Activated T-helper 1 cell treated with anti-CD3 and anti-CD28 coated beads, Interleukin-12 subunit alpha, Interleukin-12 subunit beta, Interleukin-2, Interleukin-4 antibody, amounts not matched to agents 30 ng/mL and 10 ng/mL and 1 ng/mL, durations not matched to agents 14 hours and 24 hours and 36 hours (primary cell): ENCODE measurements at regions of chr12 and their contacts with region 1.

Region 1: GRCh38 chr12:132083941-132084620 is 60.0 kb downstream of the DDX51 start:
- DNase-seq: peak; percentile 87
- H3K4me3 Mint-ChIP-seq: peak overlapping the region; percentile 97
- H3K27ac Mint-ChIP-seq: peak overlapping the region; percentile 96
- H3K4me1 Mint-ChIP-seq: peaks cover 27% of the 10 kb centered on the region
- H3K27me3 Mint-ChIP-seq: no peaks in the 10 kb centered on the region

Region 2: GRCh38 chr12:130871286-130872178 is 1212.5 kb before region 1 on chr12 and contains the start of gene RAN:
- intact Hi-C with region 1: loop called (anchors 10 kb)
- DNase-seq: peak; percentile 87
- H3K4me3 Mint-ChIP-seq: peak within 1 kb of the TSS; percentile 99
- H3K27ac Mint-ChIP-seq: peak within 1 kb of the TSS; percentile 99
- H3K4me1 Mint-ChIP-seq: peaks cover 53% of the 10 kb centered on the region
- H3K27me3 Mint-ChIP-seq: no peaks in the 10 kb centered on the region
- total RNA-seq, gene RAN: 1,823 and 1,852 TPM in 2 replicates

Region 3: DNA sequence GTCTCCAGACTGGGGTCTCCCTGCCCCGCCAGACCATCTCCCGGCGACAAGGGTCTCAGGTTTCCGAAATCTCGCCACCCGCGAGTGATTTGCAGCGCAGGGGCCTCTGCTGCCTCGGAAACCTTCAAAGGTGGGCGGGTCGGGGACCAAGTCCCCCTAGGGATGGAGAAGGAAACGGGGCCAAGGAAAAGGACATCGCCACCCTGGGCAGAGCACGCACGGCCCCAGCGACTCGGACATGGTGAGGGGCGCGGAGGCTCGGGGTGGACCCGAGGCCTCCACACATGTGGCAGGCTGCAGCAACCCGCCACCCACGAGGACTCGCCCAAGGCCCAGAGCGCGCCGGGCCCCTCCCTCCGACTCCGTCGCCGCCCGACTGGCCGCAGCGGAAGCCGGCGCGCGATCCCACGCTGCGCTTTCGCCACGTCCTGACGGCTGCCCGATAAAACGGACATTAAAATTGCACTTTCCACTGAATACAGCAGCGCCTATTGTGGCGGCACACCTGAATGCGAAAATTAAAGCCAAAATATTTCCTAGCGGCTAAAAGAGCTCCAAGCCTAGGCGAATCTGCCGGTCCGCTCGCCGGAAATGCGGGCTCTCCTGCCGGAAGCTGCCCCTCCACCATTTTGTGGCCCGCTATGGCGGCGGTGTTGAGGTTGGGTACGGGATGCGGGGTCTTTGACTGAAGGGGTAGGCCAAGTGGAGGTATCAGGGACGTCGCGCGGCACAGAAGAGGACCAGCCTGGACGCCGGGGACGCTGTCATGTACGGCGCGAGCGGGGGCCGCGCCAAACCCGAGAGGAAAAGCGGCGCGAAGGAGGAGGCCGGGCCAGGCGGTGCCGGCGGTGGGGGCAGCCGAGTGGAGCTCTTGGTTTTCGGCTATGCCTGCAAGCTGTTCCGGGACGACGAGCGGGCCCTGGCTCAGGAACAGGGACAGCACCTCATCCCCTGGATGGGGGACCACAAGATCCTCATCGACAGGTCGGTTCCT is 373.3 kb before region 1 on chr12 and contains the start of gene SFSWAP:
- intact Hi-C with region 1: loop called (anchors 10 kb)
- DNase-seq: peak; percentile 72
- H3K4me3 Mint-ChIP-seq: peak within 1 kb of the TSS; percentile 93
- H3K27ac Mint-ChIP-seq: peak within 1 kb of the TSS; percentile 92
- H3K4me1 Mint-ChIP-seq: peaks cover 26% of the 10 kb centered on the region
- H3K27me3 Mint-ChIP-seq: peaks cover 4% of the 10 kb centered on the region
- total RNA-seq, gene SFSWAP: 65.3 and 69.3 TPM in 2 replicates

Region 4: DNA sequence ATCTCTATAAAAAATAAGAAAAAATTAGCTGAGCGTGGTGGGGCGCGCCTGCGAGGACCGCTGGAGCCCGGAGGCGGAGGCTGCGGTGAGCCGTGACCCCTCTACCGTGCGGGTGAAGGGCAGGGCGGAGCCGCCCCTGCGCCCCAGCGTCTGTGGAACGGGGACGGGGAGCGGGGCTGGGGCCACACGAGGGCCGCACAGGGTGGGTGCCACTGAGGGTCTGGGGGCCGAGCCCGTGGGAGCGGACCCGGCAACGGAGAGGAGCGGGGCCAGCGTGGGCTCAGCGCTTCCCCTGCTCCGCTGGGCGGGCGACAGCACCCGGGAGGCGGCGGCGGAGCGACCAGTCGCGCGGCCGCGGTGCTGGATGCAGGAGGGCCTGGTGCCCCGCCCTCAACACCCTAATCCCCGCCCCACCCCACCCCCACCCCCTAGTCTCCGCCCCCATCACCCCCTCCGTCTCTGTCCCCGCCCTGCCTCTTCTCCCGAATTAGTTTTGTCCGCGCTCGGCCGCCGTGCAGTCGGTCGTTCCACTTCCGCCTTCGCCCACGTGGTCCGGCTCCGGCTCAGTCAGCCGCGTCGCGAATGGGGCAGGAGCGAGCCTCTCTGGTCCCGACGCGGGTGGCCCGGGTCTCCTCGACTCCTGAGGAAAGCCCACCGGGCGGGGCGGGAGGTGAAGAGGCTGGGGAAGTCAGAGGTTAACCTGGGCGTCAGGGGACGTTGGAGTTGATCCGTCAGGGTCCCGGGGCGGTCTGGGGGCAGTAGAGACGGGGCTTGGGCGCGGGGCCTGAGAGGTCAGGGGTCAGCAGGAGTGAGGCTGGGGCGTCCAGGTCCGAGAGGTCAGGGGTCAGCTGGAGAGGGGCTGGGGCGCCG is 155.1 kb before region 1 on chr12 and contains the start of gene PUS1:
- intact Hi-C with region 1: loop called (anchors 1 kb)
- DNase-seq: peak; percentile 93
- H3K4me3 Mint-ChIP-seq: peak within 1 kb of the TSS; percentile 98
- H3K27ac Mint-ChIP-seq: peak within 1 kb of the TSS; percentile 95
- H3K4me1 Mint-ChIP-seq: peaks cover 13% of the 10 kb centered on the region
- H3K27me3 Mint-ChIP-seq: no peaks in the 10 kb centered on the region
- total RNA-seq, gene PUS1: 92.1 and 100.0 TPM in 2 replicates

Region 5: DNA sequence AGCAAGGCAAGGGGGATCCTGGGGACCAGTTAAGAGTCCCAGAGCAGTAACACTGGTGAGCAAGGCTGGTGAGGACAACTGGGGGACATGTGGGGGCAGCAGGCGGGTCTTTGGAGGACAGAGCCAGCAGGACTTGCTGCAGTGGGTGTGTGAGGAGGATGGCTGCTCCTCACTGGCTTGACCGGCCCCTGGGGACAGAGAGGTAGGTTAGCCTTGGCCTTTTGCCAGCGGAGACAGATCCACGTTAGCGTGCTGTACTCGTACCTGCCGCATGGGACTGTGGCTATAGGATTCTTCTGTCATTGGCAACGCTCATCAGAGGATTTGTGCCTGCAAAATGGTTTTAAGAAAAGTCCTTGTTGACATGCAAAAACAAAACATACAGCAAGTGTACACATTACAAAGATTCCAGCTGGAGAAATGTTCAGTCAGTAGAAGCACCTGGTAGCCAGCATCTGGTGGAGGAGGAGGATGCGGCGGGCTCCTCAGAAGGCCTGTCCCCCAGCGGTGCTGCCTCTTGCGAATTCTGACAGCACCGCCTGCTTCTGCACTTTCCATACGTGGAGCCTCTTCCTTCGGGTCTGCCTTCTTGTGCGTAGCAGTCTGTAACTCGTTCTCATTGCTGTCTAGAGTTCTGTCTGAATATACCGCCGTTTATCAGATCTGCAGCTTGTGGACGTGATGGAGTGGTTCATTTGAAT is 43.0 kb before region 1 on chr12:
- intact Hi-C with region 1: no loop called
- DNase-seq: no peak
- H3K4me3 Mint-ChIP-seq: no peak overlapping the region
- H3K27ac Mint-ChIP-seq: no peak overlapping the region
- H3K4me1 Mint-ChIP-seq: no peaks in the 10 kb centered on the region
- H3K27me3 Mint-ChIP-seq: no peaks in the 10 kb centered on the region

Region 6: DNA sequence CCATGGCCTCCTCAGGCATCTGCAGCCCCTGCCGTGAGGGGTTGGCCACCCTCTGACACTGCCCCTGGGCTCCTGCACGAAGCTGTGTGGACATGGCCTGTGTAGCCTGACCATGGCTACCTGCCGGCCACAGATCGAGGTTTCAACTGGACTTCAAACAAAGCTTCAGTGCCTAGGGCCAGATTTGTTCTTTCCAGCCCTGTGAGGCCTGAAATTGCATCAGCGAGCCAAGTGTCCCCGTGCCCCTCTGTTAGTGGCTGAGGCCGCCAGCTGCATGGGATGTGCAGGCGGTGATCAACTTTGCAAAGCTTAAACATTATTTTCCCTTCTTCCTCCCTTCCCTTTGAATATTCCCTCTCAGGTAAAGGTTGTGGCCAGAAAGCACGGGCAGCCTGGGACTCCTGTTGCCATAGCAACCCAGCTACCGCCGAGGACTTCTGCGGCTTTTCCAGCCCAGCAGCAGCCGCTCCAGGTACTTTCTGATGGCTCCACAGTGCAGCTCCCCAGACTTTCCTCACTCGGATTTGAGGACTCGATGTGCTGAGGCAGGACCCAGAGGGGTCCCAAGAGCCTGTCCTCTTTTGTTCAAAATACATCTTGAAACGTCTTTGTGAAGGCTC is 24.2 kb after region 1 on chr12:
- intact Hi-C with region 1: no loop called
- DNase-seq: no peak
- H3K4me3 Mint-ChIP-seq: no peak overlapping the region
- H3K27ac Mint-ChIP-seq: no peak overlapping the region
- H3K4me1 Mint-ChIP-seq: no peaks in the 10 kb centered on the region
- H3K27me3 Mint-ChIP-seq: no peaks in the 10 kb centered on the region

Region 7: GRCh38 chr12:132144115-132144812 is 60.2 kb after region 1 on chr12 and contains the starts of genes DDX51 and NOC4L:
- intact Hi-C with region 1: loop called (anchors 1 kb)
- DNase-seq: peak; percentile 96
- H3K4me3 Mint-ChIP-seq: peak within 1 kb of the TSS; percentile 90
- H3K27ac Mint-ChIP-seq: peak within 1 kb of the TSS; percentile 95
- H3K4me1 Mint-ChIP-seq: peaks cover 12% of the 10 kb centered on the region
- H3K27me3 Mint-ChIP-seq: peaks cover 2% of the 10 kb centered on the region
- total RNA-seq, gene DDX51: 48.8 and 55.0 TPM in 2 replicates
- total RNA-seq, gene NOC4L: 49.5 and 51.3 TPM in 2 replicates

Region 8: DNA sequence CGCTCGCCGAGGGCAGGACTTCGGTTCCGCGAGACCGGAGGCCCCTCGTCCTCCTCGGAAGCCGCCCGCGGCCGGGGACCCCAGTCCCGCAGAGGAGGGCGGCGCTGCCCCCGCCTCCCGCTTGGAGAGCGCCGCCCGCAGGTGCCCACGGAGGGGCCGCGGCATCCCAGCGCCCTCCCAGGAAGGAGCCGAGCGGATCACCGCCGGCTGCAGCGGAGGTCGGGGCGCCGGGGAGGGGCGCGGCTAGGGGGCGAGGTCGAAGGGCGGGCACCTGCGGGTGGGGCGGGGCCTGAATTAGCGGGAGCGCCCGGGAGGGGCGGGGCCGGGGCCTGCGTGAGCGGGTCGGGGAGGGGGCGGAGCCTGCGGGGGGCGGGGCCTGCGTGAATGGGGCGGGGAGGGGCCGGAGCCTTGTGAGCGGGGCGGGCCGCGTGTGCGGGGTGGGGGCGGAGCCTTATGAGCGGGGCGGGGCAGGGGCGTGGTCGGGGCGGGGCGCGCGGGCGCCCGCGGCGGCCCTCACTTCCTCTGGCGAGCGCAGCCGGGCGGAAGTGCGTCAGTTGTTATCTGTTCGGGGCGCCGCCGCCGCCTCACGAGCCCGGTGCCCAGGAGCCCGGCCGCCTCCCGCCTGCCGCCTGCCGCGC is 405.6 kb after region 1 on chr12 and contains the start of gene FBRSL1:
- intact Hi-C with region 1: loop called (anchors 2 kb)
- DNase-seq: peak; percentile 86
- H3K4me3 Mint-ChIP-seq: peak within 1 kb of the TSS; percentile 87
- H3K27ac Mint-ChIP-seq: peak within 1 kb of the TSS; percentile 90
- H3K4me1 Mint-ChIP-seq: peaks cover 45% of the 10 kb centered on the region
- H3K27me3 Mint-ChIP-seq: peaks cover 1% of the 10 kb centered on the region
- total RNA-seq, gene FBRSL1: 75.8 and 80.2 TPM in 2 replicates